Calu3 (cell line): ENCODE measurements at regions of chr3 and their contacts with region 1.

Region 1: DNA sequence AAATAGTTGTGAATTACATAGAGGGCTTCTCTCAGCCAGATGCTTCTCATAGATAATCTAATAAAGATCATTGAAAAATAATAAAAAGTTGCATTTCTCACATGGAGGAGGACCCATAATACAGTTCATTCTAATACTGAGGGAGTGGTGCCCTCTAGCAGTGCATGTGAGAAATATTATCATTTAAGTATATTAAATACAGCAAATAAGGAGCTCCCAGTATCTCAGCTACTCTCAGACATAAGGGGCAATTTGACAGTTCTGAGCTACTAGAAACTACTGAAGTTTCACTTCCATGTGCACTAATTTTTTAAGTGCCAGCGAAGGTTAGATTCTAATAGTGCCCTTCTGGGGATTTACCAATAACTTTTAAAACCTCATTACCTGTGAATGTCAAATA is 188.3 kb downstream of the IL5RA start:
- DNase-seq: peak; percentile 12
- H3K4me3 Mint-ChIP-seq: no peak overlapping the region
- H3K27ac Mint-ChIP-seq: no peak overlapping the region
- H3K4me1 Mint-ChIP-seq: no peaks in the 10 kb centered on the region
- H3K27me3 Mint-ChIP-seq: no peaks in the 10 kb centered on the region
- CTCF ChIP-seq: no peak

Region 2: GRCh38 chr3:2765002-2765579 is 156.8 kb before region 1 on chr3:
- CTCF ChIA-PET with region 1: interaction called, 3 read pairs
- intact Hi-C with region 1: loop called (anchors 1 kb)
- DNase-seq: peak; percentile 16
- H3K4me3 Mint-ChIP-seq: no peak overlapping the region
- H3K27ac Mint-ChIP-seq: no peak overlapping the region
- H3K4me1 Mint-ChIP-seq: no peaks in the 10 kb centered on the region
- H3K27me3 Mint-ChIP-seq: no peaks in the 10 kb centered on the region
- CTCF ChIP-seq: no peak